IMR-90 (cell line): ENCODE measurements at regions of chr1 and their contacts with region 1.

Region 1: DNA sequence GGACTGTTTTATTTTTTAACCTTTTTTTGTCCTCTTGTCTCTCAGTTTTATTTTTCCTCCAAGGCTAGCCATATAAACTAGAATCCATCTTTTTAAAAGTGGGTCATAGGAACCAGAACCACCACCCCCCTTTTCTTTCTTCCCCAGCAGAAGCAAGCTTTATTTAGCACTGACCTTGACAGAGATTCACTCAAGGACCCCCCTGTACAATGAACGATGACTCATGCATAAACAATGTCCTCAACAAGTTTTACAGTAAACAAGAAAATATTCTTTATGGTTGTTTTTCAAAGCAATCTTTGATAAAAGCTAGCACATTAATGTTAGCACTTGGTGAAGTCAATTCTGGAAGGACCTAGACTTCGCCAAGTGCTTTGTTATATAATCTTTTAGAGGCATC is 14.1 kb downstream of the PKN2 start:
- DNase-seq: peak; percentile 23
- ATAC-seq: peak; percentile 23
- H3K4me3 ChIP-seq: no peak overlapping the region
- H3K27ac ChIP-seq: no peak overlapping the region
- H3K4me1 ChIP-seq: peaks cover 10% of the 10 kb centered on the region; the same call in 1 of the 2 replicates
- H3K27me3 ChIP-seq: no peaks in the 10 kb centered on the region
- CTCF ChIP-seq: no peak
- POLR2A ChIP-seq: no peak
- RAD21 ChIP-seq: no peak

Region 2: GRCh38 chr1:87120779-87121178 is 1577.4 kb before region 1 on chr1:
- CTCF ChIA-PET with region 1: no interaction called
- POLR2A ChIA-PET with region 1: no interaction called
- dilution Hi-C with region 1: no loop called
- in situ Hi-C with region 1: no loop called
- intact Hi-C with region 1: loop called (anchors 5 kb)
- DNase-seq: no peak
- ATAC-seq: no peak
- H3K4me3 ChIP-seq: no peak overlapping the region
- H3K27ac ChIP-seq: no peak overlapping the region
- H3K4me1 ChIP-seq: peaks cover 8% of the 10 kb centered on the region
- H3K27me3 ChIP-seq: no peaks in the 10 kb centered on the region
- CTCF ChIP-seq: 0 out of 2 replicates have a peak, but pooled peaks have one; percentile 8
- POLR2A ChIP-seq: no peak
- RAD21 ChIP-seq: no peak

Region 3: DNA sequence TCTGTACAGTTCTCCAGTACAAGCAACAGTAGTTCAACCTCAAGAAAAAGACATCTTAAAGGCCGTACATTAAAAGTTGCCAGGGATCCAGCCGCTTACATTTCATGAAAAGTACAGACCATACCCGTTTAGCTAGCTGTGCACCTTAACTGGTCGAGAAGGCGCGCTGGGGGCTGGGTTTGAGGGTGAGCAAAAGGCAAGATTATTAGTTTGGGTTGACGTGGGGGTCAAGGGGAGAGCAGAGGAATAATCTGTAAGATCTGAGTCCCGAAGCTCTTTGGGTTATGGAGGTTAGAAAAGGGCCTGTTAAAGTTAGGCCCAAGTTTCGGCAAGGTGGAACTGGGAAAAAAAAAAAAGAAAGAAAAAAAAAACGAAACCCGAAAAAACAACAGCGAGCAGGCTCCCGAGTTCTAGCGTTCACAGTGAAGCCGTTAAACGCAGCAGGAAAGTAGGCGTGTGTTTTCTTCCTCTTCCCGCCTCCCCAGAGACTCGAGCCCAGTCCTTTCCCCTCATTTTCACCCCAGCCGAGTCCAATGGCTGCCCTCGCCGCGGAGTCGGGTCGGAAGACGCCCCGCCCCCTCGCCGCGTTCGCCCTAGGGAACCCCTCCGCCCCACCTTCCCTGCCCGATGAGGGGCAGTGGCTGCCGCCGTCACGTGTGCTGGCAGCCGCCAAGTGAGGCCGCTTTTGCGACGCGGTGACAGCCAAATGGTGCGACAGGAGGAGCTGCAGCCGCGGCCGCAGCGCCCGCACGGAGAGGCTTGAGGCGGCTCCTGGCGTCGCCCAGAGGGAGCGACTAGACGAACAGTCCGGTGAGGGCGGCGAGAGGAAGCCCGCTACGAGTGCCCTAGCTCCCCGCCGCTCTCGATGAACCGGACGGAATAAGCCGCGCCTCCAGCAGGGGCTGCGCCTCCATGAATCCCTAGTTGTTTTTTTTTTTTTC is 14.3 kb before region 1 on chr1 and contains the start of gene PKN2:
- CTCF ChIA-PET with region 1: interaction called, 10 read pairs
- POLR2A ChIA-PET with region 1: interaction called, 5 read pairs
- dilution Hi-C with region 1: no loop called
- in situ Hi-C with region 1: no loop called
- intact Hi-C with region 1: no loop called
- DNase-seq: peak; percentile 98
- ATAC-seq: peak; percentile 97
- H3K4me3 ChIP-seq: peak within 1 kb of the TSS; percentile 75
- H3K27ac ChIP-seq: peak within 1 kb of the TSS; percentile 86
- H3K4me1 ChIP-seq: no peaks in the 10 kb centered on the region
- H3K27me3 ChIP-seq: no peaks in the 10 kb centered on the region
- CTCF ChIP-seq: peak; percentile 31
- POLR2A ChIP-seq: peak; percentile 81
- RAD21 ChIP-seq: 0 out of 2 replicates have a peak, but pooled peaks have one; percentile 6
- total RNA-seq, gene PKN2: 22.2 and 40.8 TPM in 2 replicates

Region 4: DNA sequence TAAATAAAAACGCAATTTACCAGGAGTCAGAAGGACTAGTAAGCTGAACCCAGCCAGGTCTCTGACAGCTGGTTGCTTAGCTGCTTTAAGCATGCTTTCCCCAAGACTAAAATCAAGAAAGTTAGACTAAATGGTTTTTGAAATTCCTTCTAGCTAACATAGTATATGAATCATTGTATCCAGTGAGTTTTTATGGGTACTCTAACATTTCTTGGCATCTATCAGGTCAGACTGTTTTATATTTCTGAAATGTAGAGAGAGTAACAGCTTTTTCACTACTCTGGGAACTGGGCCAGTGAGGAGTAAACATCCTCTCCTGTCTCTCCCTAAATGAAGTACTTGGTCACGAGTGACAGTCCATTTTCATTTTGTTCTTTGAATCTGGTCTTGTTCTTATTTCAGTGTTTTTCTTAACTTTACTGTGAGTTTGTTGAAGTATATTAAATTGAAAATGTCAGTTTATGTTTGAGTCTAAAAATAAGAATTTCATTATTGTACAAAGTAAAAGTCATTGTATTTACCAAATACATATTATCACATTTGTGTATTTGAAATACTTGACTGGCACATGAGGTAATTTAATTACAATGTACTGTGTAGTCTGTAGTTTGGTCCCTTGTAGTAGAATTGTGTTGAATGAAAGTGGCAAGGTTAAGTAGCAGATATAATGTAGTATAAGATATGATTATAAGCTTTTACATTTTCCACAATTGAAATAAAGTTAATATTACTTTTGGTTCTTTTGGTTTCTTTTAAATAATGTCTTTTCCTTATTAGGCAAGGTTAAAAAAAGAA is 33.5 kb after region 1 on chr1:
- CTCF ChIA-PET with region 1: no interaction called
- POLR2A ChIA-PET with region 1: no interaction called
- dilution Hi-C with region 1: no loop called
- in situ Hi-C with region 1: no loop called
- intact Hi-C with region 1: loop called (anchors 2 kb)
- DNase-seq: peak; percentile 97
- ATAC-seq: peak; percentile 95
- H3K4me3 ChIP-seq: peak overlapping the region; percentile 7; the same call in 1 of the 2 replicates
- H3K27ac ChIP-seq: no peak overlapping the region
- H3K4me1 ChIP-seq: peaks cover 5% of the 10 kb centered on the region
- H3K27me3 ChIP-seq: no peaks in the 10 kb centered on the region
- CTCF ChIP-seq: no peak
- POLR2A ChIP-seq: no peak
- RAD21 ChIP-seq: no peak

Region 5: DNA sequence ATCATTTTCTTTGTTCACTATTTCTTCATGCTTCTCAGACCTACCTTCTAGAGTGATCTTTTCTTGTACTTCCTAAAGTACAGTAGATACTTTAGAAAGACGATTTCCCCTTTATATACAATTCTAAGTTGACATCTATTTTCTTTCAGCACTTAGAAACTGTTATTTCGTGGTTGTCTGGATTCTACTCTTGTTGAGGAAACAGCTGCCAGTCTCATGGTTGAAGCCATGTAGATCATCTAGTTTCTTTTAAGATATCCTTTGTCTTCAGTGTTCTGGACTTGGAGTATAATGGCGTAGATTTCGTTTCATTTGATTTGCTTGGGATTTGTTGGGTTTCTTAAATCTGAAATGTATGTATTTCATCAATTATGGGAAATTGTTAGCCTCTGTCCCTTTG is 53.6 kb after region 1 on chr1:
- CTCF ChIA-PET with region 1: no interaction called
- POLR2A ChIA-PET with region 1: no interaction called
- dilution Hi-C with region 1: no loop called
- in situ Hi-C with region 1: no loop called
- intact Hi-C with region 1: no loop called
- DNase-seq: no peak
- ATAC-seq: no peak
- H3K4me3 ChIP-seq: no peak overlapping the region
- H3K27ac ChIP-seq: no peak overlapping the region
- H3K4me1 ChIP-seq: no peaks in the 10 kb centered on the region
- H3K27me3 ChIP-seq: no peaks in the 10 kb centered on the region
- CTCF ChIP-seq: no peak
- POLR2A ChIP-seq: no peak
- RAD21 ChIP-seq: no peak